ENCODE measurements at regions of chr10 and their contacts with region 1.

Region 1: DNA sequence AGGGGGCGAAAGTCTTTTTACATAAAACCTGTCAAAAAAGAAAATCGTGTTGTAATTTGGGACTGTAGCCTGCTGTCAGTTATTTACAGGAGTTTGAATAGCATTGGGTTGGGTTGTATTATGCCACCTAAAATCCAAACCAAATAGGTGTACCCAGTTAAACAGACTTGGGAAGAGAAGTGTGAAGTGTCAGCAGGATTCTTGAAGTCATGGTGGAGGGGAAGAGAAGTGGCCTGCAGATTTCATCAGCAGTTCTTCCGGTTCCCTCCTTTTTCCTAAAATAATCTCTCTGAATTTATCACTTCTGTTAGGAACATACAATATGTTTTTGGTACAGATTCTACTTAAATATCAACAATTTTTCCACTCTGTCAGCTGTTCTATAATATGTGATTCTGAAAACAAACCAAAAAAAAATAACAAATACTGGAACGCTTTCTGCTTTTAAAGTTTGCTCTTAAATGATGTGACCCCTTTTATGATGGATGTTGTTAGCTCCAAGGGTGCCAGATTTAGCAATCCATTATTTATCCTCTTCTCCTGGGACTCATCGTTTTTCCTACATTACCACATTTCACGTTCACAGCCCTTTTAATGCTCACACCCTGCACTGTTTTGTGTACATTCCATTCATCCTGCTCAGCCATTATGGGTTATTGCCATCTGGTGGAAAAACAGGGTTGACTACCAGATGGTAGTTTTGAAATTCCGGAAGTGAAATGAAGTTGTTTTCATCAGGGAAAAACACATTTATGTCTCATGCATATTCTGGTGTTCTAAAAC is 18.7 kb upstream of the ARHGAP12 start:
- DNase-seq: no peak
- ATAC-seq: peak; percentile 86
- H3K4me3 ChIP-seq: peak overlapping the region in 1 of 2 experiments; percentile 29; a peak in 1 of 4 replicates
- H3K27ac ChIP-seq: peak overlapping the region; percentile 97
- H3K4me1 ChIP-seq: peaks cover 37% of the 10 kb centered on the region
- H3K27me3 ChIP-seq: no peaks in the 10 kb centered on the region
- CTCF ChIP-seq: peak; percentile 63

Region 2: GRCh38 chr10:31770307-31770902 is 176.9 kb before region 1 on chr10:
- CTCF ChIA-PET with region 1: no interaction called
- POLR2A ChIA-PET with region 1: no interaction called
- in situ Hi-C with region 1: no loop called
- intact Hi-C with region 1: no loop called
- DNase-seq: no peak
- ATAC-seq: no peak; the same call in 1 of the 2 replicates
- H3K4me3 ChIP-seq: no peak overlapping the region
- H3K27ac ChIP-seq: 0 out of 2 replicates have a peak overlapping the region, but pooled peaks have one; percentile 9
- H3K4me1 ChIP-seq: peaks cover 4% of the 10 kb centered on the region; the same call in 1 of the 2 replicates
- H3K27me3 ChIP-seq: no peaks in the 10 kb centered on the region
- CTCF ChIP-seq: peak; percentile 77

Region 3: DNA sequence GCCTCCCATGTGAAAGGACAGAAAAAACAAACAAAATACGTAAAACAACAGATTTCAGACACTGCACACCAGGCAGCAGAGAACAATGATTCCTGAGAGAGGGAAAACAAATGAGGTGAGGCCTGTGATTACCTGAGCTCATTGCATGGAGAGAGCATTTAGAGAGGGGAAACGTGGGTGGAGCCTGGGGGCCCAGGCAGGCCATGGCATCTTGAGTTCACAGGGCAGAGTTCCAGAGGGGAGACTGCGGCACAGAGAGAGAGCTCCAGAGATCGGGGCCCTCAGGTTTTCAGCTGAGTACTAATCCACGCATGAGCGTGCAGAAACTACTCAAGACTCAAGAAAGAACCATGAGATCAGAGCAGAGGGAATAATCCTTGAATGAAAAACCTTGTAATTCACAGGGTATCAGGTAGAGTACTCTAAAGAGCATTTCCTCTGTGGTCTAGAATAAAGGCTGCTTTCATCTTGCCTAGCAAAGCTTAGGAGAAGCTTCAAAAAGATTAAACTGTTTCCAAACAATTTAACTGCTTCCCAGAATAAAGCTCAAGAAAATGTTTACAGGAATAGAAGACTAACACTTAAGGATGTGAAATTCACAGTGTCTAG is 27.9 kb after region 1 on chr10:
- CTCF ChIA-PET with region 1: interaction called, 10 read pairs
- POLR2A ChIA-PET with region 1: no interaction called
- in situ Hi-C with region 1: no loop called
- intact Hi-C with region 1: no loop called
- DNase-seq: no peak
- ATAC-seq: no peak
- H3K4me3 ChIP-seq: no peak overlapping the region
- H3K27ac ChIP-seq: no peak overlapping the region
- H3K4me1 ChIP-seq: no peaks in the 10 kb centered on the region
- H3K27me3 ChIP-seq: no peaks in the 10 kb centered on the region
- CTCF ChIP-seq: no peak

Region 4: DNA sequence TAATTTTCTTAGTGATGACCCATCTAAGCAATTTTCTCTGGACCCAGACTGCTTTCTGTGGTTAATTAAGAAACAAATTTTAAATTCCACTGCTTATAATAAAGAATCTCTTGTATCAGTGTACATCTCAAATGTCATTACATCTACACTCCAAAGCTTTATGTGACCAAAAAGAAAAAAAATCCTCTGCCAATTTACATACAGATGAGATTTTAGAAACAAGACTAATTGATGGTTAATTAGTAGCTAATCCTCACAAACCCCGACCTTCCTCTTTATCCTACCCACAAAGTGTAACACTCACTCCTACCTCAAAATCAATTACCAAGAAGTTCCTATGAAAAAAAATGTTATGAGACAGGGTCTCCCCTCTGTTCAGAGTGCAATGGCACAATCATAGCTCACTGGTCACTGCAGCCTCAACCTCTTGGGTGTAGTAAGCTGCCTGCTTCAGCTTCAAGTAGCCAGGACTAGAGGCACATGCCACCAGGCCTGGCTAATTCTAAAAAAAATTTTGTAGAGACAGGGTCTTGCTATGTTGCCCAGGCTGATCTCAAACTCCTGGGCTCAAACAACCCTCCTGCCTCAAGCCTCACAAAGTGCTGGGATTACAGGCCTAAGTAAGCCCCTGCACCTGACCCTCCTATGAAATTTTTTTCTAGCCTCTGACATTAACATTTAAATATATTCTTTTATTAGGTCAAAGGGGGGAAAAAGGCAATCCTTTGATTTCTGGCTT is 94.1 kb after region 1 on chr10:
- CTCF ChIA-PET with region 1: no interaction called
- POLR2A ChIA-PET with region 1: no interaction called
- in situ Hi-C with region 1: no loop called
- intact Hi-C with region 1: no loop called
- DNase-seq: no peak
- ATAC-seq: peak; percentile 68; the same call in 1 of the 2 replicates
- H3K4me3 ChIP-seq: no peak overlapping the region
- H3K27ac ChIP-seq: no peak overlapping the region
- H3K4me1 ChIP-seq: no peaks in the 10 kb centered on the region; the same call in 1 of the 2 replicates
- H3K27me3 ChIP-seq: no peaks in the 10 kb centered on the region
- CTCF ChIP-seq: no peak

Measured in Panc1 (cell line).